HEK293 (cell line): ENCODE measurements at regions of chr12 and their contacts with region 1.

Region 1: GRCh38 chr12:54306925-54307741 is 6.3 kb upstream of the NFE2 start:
- H3K4me3 ChIP-seq: no peak overlapping the region
- H3K27ac ChIP-seq: no peak overlapping the region
- H3K4me1 ChIP-seq: peaks cover 8% of the 10 kb centered on the region
- CTCF ChIP-seq: no peak

Region 2: DNA sequence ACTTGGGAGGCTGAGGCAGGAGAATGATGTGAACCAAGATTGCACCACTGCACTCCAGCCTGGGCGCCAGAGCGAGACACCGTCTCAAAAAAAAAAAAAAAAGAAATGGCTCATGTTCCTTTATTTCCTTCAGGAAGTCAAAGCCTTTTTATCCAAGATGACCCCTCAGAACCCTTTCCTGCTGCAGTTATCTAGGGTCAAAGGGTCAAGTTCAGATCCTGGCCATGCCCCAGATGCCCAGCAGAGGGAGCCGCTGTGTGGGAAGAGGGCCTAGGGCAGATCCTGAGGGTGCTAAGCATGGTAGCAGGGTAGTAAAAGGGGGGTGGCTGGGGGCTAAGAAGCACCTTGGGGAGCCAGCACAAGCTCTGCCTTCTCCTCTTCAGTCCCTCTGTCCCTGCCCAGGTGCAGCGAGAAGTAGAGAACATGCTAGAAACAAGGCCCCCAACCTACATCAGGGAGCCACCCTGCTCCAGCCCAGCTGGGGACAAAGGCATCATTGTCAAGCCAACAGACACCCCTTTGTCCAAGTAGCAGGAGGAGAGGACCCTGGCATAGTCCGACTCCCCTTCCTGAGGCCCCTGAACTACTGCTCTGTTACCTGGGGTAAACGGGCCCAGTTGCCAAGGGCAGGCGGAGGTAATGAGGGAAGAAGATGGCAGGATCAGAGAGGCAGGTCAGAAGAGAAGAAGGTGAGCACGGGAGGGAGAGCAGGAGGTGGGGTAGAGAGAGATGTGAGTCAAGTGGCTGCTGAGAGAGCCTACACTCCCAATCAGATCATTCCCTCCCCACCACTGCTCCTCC is 12.8 kb before region 1 on chr12:
- CTCF ChIA-PET with region 1: interaction called, 21 read pairs
- POLR2A ChIA-PET with region 1: interaction called, 8 read pairs
- H3K4me3 ChIP-seq: no peak overlapping the region
- H3K27ac ChIP-seq: no peak overlapping the region
- H3K4me1 ChIP-seq: no peaks in the 10 kb centered on the region
- CTCF ChIP-seq: peak; percentile 69

Region 3: GRCh38 chr12:54352022-54352531 is 44.9 kb after region 1 on chr12:
- CTCF ChIA-PET with region 1: no interaction called
- POLR2A ChIA-PET with region 1: no interaction called
- H3K4me3 ChIP-seq: no peak overlapping the region
- H3K27ac ChIP-seq: peak overlapping the region; percentile 71
- H3K4me1 ChIP-seq: peaks cover 18% of the 10 kb centered on the region
- CTCF ChIP-seq: no peak